ENCODE measurements at regions of chr9 and their contacts with region 1.

Region 1: GRCh38 chr9:129726322-129727160 is 26.3 kb downstream of the PTGES start:
- DNase-seq: peak; percentile 80
- ATAC-seq: peak; percentile 90 to 92

Region 2: DNA sequence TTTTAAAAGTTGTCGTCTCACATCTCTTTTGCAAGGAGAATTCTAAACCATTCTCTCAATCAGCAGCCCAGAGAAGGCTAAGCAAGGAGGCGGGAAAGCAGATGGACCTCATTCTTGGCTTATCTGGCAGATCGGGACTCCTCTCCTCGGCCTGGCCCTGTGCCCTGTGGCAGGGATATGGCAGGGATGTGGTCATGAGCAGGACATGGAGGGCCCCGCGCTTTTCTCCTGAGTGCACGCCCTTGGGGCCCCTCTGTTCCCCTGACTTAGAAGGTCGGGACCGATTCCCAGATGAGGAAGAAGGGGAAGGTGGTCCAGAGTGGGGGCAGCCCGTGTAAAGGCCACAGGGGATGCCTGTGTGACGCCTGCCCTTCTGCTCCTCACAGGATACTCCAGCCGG is 678.5 kb before region 1 on chr9:
- intact Hi-C with region 1: no loop called
- DNase-seq: no peak
- ATAC-seq: no peak

Region 3: DNA sequence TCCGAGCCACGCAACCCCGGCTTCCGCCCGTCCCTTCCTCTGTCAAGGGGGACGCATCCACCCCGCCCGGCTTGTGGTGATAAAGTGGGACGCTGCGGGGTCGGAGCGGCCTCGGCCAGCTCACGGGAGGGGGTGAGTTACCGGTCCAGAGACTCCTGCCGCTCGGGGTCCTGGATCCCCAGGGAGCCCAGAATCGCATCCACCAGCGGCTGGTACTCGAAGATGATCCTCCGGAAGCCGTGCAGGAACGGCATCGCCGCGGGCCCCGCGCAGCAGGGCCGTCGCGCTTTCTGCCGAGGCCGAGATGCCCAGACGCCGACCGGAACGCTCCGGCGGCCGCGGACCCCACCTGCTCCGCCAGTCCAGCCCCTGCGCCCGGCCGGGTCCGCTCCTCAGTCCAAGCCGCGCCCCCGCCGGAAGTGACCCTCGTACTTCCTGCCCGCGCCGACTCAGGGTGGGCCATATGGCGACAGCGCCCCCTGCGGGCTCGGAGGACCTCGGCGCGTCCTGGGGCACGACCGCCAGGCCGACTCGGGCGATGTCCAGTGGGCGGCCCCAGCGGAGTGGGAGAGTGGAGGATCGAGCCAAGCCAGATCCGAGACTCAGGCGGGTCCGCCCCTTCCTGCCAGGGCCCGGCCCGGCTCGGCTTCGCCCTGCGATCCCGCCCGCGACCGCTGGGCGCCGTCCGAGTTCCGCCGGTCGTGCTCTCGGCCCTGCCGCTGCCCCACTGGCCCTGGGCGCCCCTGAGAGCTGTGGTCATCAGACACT is 84.6 kb before region 1 on chr9 and contains the start of gene ASB6:
- intact Hi-C with region 1: loop called in 1 of 2 experiments (anchors 10 kb)
- DNase-seq: peak; percentile 97
- ATAC-seq: peak; percentile 96 to 97
- total RNA-seq, gene ASB6: 8.3 to 11.6 TPM

Measured in left cardiac atrium (tissue), 4 donors.